ENCODE measurements at regions of chr6 and their contacts with region 1.

Region 1: GRCh38 chr6:159104163-159104925 is 59.6 kb upstream of the TAGAP start:
- DNase-seq: peak; percentile 86
- ATAC-seq: peak; percentile 70
- H3K4me3 Mint-ChIP-seq: peak overlapping the region; percentile 29
- H3K27ac Mint-ChIP-seq: peak overlapping the region; percentile 92
- H3K4me1 Mint-ChIP-seq: peaks cover 73% of the 10 kb centered on the region
- H3K27me3 Mint-ChIP-seq: no peaks in the 10 kb centered on the region

Region 2: DNA sequence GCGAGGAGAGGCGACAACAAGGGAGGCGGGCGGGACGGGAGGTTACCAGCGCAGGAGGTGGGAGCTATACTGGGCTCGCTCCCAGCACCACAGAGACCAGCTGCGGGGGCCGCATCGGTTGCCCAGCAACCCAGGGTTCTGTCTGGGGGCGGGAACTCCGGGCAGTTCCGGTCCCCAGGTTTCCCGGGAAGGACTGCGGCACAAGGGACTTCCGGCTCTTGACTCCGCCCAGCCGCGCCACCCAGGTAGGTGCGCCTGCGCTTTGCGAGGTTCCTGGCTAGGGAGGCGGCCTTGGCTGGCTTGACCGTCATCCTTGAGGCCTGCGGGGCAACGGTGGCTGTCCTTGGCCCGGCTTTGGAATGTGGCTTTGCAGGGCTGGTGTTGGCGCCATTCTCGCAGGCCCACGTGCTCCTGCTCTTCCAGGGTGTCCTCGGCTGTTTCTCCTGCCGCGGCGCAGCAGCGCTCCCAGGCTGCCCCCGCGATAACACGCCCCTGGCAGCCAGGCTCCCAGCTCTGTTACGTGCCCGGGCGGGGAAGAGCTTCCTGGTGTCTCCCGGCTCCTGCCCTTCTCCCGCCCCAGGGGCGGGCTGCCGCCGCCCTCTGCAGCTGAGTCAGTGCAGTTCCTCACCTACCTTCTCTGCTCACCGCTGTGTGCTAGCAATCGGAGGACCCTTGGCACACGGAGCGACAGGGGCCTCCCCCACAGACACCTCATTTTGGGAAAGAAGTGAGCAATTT is 104.5 kb before region 1 on chr6 and contains the start of gene RSPH3:
- CTCF ChIA-PET with region 1: interaction called, 320 read pairs
- DNase-seq: peak; percentile 95
- ATAC-seq: peak; percentile 92
- H3K4me3 Mint-ChIP-seq: peak within 1 kb of the TSS; percentile 93
- H3K27ac Mint-ChIP-seq: peak within 1 kb of the TSS; percentile 71
- H3K4me1 Mint-ChIP-seq: peaks cover 31% of the 10 kb centered on the region
- H3K27me3 Mint-ChIP-seq: no peaks in the 10 kb centered on the region
- total RNA-seq, gene RSPH3: 2.1 TPM

Region 3: DNA sequence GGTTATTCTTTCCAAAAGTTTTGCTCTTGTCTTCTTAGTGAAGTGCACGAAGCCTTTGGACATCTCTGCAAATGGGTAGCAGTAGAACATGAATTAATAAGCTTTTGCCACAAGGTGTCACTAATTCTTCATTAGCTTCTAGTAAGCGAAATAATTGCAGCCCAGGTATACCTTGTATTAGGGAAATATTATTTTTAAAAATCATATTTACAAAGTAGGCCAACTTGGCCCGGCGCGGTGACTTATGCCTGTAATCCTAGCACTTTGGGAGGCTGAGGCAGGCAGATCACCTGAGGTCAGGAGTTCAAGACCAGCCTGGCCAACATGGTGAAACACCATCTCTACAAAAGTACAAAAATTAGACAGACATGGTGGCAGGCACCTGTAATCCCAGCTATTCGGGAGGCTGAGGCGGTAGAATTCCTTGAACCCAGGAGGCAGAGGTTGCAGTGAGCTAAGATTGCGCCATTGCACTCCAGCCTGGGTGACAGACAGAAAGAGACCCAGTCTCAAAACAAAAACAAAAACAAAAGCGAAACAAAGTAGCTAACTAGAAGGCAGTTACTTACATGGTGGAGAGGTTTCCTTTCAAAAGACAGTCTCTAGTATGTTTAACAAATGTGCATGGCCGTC is 95.6 kb before region 1 on chr6:
- CTCF ChIA-PET with region 1: interaction called, 320 read pairs
- DNase-seq: no peak
- ATAC-seq: peak; percentile 84
- H3K4me3 Mint-ChIP-seq: peak overlapping the region; percentile 62
- H3K27ac Mint-ChIP-seq: peak overlapping the region; percentile 82
- H3K4me1 Mint-ChIP-seq: peaks cover 36% of the 10 kb centered on the region
- H3K27me3 Mint-ChIP-seq: no peaks in the 10 kb centered on the region

Region 4: GRCh38 chr6:159033160-159034049 is 70.9 kb before region 1 on chr6:
- CTCF ChIA-PET with region 1: interaction called, 17 read pairs
- DNase-seq: no peak
- ATAC-seq: no peak
- H3K4me3 Mint-ChIP-seq: no peak overlapping the region
- H3K27ac Mint-ChIP-seq: no peak overlapping the region
- H3K4me1 Mint-ChIP-seq: peaks cover 18% of the 10 kb centered on the region
- H3K27me3 Mint-ChIP-seq: no peaks in the 10 kb centered on the region

Region 5: GRCh38 chr6:159042003-159042825 is 62.1 kb before region 1 on chr6:
- CTCF ChIA-PET with region 1: interaction called, 198 read pairs
- DNase-seq: peak; percentile 90
- ATAC-seq: peak; percentile 52
- H3K4me3 Mint-ChIP-seq: peak overlapping the region; percentile 95
- H3K27ac Mint-ChIP-seq: peak overlapping the region; percentile 97
- H3K4me1 Mint-ChIP-seq: peaks cover 63% of the 10 kb centered on the region
- H3K27me3 Mint-ChIP-seq: no peaks in the 10 kb centered on the region

Region 6: DNA sequence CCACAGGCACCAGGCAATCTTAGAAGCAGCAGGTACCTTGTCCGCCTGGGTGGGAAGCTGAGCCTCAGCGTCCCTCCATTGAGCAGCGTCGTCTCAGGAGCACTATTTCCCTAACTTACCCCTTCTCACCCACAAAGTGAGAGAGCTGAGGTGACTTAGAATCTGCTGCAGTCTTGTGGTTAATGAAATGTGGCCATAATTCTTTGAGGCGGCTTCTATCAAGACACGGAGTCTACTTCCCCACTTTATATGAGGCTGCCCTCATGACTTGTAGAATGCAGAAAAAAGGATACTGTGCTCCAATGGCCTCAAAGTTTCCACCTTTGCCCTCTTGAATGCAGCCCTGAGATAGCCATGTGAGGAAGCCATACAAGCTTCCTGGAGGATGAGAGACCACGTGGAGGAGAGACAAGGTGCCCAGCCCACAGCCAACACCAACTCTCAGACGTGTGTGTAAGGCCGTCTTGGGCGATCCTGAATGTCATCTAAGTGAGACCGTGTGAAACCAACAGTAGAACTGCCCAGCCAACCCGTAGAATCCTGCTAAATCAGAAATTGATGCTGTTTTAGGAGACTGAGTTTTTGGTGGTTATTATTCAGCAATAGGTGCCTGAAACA is 50.5 kb before region 1 on chr6:
- CTCF ChIA-PET with region 1: interaction called, 16 read pairs
- DNase-seq: no peak
- ATAC-seq: peak; percentile 50
- H3K4me3 Mint-ChIP-seq: no peak overlapping the region
- H3K27ac Mint-ChIP-seq: peak overlapping the region; percentile 17
- H3K4me1 Mint-ChIP-seq: peaks cover 58% of the 10 kb centered on the region
- H3K27me3 Mint-ChIP-seq: no peaks in the 10 kb centered on the region

Region 7: GRCh38 chr6:159062564-159062945 is 41.8 kb before region 1 on chr6:
- CTCF ChIA-PET with region 1: interaction called, 81 read pairs
- DNase-seq: peak; percentile 88
- ATAC-seq: peak; percentile 86
- H3K4me3 Mint-ChIP-seq: peak overlapping the region; percentile 55
- H3K27ac Mint-ChIP-seq: peak overlapping the region; percentile 99
- H3K4me1 Mint-ChIP-seq: peaks cover 92% of the 10 kb centered on the region
- H3K27me3 Mint-ChIP-seq: peaks cover 2% of the 10 kb centered on the region

Measured in activated CD8-positive, alpha-beta memory T cell treated with anti-CD3 and anti-CD28 coated beads, Interleukin-2, amount 10 ng/mL, durations not matched to agents 7 days and 5 days (primary cell).